Heart right ventricle (tissue), 16 donors: ENCODE measurements at regions of chr2 and their contacts with region 1.

Region 1: GRCh38 chr2:38315707-38316333 is 61.3 kb downstream of the ATL2 start:
- DNase-seq: peak in 1 of 2 donors; percentile 32
- ATAC-seq: peak in 7 of 8 donors; percentile 33 to 73 (median 65)
- H3K4me3 ChIP-seq: no peak overlapping the region
- H3K27ac ChIP-seq: no peak overlapping the region
- H3K4me1 ChIP-seq: peaks cover 0 to 10% (median 0%) of the 10 kb centered on the region in 9 donors
- H3K27me3 ChIP-seq: no peaks in the 10 kb centered on the region
- CTCF ChIP-seq: peak; percentile 67 to 88 (median 81)

Region 2: DNA sequence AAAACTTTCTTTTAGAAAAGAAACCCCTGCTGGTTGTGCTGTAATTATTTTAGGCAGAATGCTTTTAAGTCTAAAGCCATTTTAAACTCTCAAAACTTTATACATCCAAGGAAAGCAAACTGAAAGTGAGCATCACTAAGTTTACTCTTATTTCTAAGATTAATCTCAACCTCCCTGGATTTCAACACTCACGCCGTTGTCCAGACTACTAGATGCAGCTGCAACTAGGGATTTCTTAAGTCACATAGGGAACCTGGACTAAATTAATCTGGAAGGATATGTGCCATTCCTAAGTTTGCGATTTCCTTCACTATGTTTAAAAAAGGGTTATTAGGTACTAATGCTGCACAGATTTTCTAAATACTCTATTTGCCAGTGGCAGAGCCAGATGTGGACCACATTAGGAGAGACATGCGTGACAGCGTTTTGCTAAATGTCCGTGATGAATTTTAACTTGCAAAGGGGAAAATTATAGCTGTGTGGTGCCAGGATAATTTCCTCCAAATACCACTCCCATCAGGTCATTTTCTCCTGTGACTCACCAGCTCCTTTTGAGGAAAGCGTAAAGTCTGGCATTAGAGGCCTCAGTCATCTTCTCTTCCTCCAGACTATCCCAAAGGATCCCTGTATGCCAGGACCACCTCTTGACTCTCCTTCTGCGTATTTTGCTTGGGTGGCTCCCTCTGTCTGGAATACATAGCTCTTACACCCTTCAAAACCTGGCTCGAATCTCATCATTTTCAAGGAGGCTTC is 82.4 kb before region 1 on chr2:
- intact Hi-C with region 1: no loop called
- DNase-seq: peak in 1 of 2 donors; percentile 44
- ATAC-seq: peak; percentile 71 to 94 (median 90)
- H3K4me3 ChIP-seq: no peak overlapping the region
- H3K27ac ChIP-seq: peak overlapping the region in 8 of 10 donors; percentile 13 to 79 (median 58)
- H3K4me1 ChIP-seq: no peaks in the 10 kb centered on the region
- H3K27me3 ChIP-seq: peaks cover 0 to 6% (median 0%) of the 10 kb centered on the region in 7 donors
- CTCF ChIP-seq: peak in 3 of 9 donors; percentile 28 to 38 (median 30)

Region 3: DNA sequence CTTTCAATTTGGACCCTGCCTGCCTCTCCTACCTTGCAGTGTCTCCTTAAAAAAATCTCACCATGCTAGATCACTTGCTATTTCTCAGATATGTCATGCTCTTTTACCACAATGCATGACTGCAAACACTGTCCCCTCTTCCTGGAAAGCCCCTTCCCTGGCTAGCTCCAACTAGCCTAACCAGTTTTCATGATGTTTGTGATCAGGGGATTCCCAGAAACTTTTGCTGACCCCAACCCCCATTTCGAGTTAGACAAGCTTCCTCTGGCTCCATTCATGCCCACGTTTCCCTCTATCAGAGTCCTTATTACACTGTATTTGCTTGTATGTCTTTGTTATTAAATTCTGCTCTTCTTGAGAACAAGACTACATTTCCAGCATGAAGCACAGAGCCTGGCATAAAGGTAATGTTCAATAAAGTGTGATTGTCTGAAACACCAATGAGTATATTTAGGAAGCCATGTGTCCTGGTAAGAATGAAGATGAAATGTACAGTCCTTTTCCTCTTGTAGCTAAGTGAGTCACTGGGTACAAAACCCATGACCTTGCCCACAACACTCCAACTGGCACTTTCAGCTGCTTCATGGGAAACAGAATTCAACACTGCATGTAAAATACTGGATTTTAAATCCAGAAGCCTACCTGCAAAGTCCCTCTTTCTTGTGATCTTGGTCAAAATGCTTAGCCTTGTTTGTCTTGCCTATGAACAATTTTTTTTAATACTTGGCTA is 123.2 kb after region 1 on chr2:
- intact Hi-C with region 1: loop called in 1 of 10 experiments (anchors 10 kb)
- DNase-seq: no peak
- ATAC-seq: peak in 1 of 8 donors; percentile 20
- H3K4me3 ChIP-seq: no peak overlapping the region
- H3K27ac ChIP-seq: no peak overlapping the region
- H3K4me1 ChIP-seq: peaks cover 0 to 29% (median 21%) of the 10 kb centered on the region in 9 donors
- H3K27me3 ChIP-seq: no peaks in the 10 kb centered on the region
- CTCF ChIP-seq: no peak

Region 4: GRCh38 chr2:38465789-38466127 is 149.9 kb after region 1 on chr2:
- intact Hi-C with region 1: loop called in 5 of 10 experiments (anchors 5 to 10 kb)
- DNase-seq: peak in 1 of 2 donors; percentile 23
- ATAC-seq: peak in 4 of 8 donors; percentile 50 to 70 (median 60)
- H3K4me3 ChIP-seq: no peak overlapping the region
- H3K27ac ChIP-seq: no peak overlapping the region
- H3K4me1 ChIP-seq: no peaks in the 10 kb centered on the region
- H3K27me3 ChIP-seq: no peaks in the 10 kb centered on the region
- CTCF ChIP-seq: peak; percentile 10 to 63 (median 45)

Region 5: DNA sequence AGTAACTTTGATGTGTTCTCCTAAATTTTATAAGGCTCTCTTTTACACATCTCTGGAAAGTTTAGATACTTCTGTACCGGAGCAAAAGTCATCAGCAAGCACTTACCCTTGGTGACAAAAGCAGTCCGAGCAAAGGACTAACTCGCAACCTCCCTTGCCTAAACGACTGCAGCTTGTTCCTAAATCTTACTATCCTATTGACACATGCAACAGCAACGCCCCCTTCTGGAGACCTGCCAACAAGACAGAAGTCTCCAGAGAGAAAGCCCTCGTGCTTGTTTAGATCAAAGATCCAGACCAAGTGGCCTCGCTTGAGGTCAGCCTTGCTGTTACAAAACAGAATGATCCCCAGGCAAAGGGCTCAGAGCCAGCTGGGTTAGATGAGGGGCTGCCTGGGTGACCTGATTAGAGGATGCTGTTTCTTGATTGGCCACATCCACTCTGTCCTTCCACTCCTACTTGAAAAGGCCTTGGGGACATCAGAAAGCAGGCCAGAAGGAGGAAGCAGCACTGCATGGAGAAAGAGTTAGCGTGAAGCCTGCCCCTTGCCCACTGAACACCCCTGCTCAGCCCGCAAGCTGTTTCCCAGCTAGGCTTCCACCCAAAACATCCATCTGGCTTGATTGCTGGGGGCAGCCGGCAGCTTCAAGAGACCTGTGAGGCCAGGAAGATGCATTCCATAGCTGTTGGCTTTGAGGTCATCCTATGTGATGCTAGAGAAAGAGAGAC is 192.7 kb after region 1 on chr2:
- intact Hi-C with region 1: loop called in 7 of 10 experiments (anchors 2 to 10 kb)
- DNase-seq: peak; percentile 73 to 91
- ATAC-seq: peak; percentile 77 to 86 (median 82)
- H3K4me3 ChIP-seq: no peak overlapping the region
- H3K27ac ChIP-seq: peak overlapping the region in 3 of 10 donors; percentile 9 to 39 (median 37)
- H3K4me1 ChIP-seq: peaks cover 0 to 29% (median 14%) of the 10 kb centered on the region in 9 donors
- H3K27me3 ChIP-seq: no peaks in the 10 kb centered on the region
- CTCF ChIP-seq: peak in 8 of 9 donors; percentile 9 to 67 (median 47)

Region 6: GRCh38 chr2:38535744-38536506 is 220.1 kb after region 1 on chr2:
- intact Hi-C with region 1: loop called in 1 of 10 experiments (anchors 1 kb)
- DNase-seq: peak; percentile 79 to 87
- ATAC-seq: peak; percentile 94 to 97 (median 96)
- H3K4me3 ChIP-seq: peak overlapping the region; percentile 32 to 63 (median 54)
- H3K27ac ChIP-seq: peak overlapping the region in 2 of 10 donors; percentile 20 to 47
- H3K4me1 ChIP-seq: peaks cover 0 to 14% (median 6%) of the 10 kb centered on the region in 9 donors
- H3K27me3 ChIP-seq: peaks cover 0 to 5% (median 0%) of the 10 kb centered on the region in 7 donors
- CTCF ChIP-seq: peak; percentile 86 to 98 (median 93)

Region 7: DNA sequence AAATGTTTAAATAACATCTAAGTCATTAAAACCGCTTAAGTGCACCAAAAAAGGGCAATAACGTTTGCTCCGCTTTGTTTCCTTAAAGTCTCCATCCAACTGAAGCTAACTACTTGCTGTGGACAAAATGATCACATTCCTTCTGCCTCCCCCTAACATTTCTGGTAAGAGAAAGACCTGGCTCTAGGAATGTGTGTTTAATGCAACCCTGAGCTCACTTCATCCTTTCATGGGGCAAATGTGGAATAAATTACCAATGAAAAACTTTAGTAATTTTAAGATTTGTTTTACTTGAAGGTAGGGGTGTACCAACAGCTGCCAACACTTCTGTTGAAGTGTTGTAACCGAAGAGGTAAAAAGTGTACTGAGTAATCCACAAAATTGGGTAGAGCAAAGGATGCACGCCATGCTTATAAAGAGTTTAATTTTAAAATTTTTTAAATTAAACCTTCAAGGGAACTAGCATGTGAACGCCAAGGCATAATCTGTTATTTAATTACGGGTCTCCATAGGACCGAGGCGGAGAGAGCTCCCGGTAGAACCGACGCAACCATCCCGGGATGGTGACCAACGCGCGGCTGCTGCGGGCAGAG is 285.7 kb after region 1 on chr2:
- intact Hi-C with region 1: no loop called
- DNase-seq: no peak
- ATAC-seq: no peak
- H3K4me3 ChIP-seq: peak overlapping the region; percentile 65 to 97 (median 91)
- H3K27ac ChIP-seq: peak overlapping the region; percentile 92 to 98 (median 97)
- H3K4me1 ChIP-seq: peaks cover 5 to 60% (median 51%) of the 10 kb centered on the region in 9 donors
- H3K27me3 ChIP-seq: no peaks in the 10 kb centered on the region
- CTCF ChIP-seq: no peak

Region 8: GRCh38 chr2:38720613-38721241 is 404.9 kb after region 1 on chr2:
- intact Hi-C with region 1: loop called in 3 of 10 experiments (anchors 10 kb)
- DNase-seq: peak; percentile 73 to 80
- ATAC-seq: peak; percentile 86 to 94 (median 90)
- H3K4me3 ChIP-seq: no peak overlapping the region
- H3K27ac ChIP-seq: peak overlapping the region in 7 of 10 donors; percentile 11 to 78 (median 63)
- H3K4me1 ChIP-seq: peaks cover 0 to 38% (median 19%) of the 10 kb centered on the region in 9 donors
- H3K27me3 ChIP-seq: no peaks in the 10 kb centered on the region
- CTCF ChIP-seq: no peak

Region 9: DNA sequence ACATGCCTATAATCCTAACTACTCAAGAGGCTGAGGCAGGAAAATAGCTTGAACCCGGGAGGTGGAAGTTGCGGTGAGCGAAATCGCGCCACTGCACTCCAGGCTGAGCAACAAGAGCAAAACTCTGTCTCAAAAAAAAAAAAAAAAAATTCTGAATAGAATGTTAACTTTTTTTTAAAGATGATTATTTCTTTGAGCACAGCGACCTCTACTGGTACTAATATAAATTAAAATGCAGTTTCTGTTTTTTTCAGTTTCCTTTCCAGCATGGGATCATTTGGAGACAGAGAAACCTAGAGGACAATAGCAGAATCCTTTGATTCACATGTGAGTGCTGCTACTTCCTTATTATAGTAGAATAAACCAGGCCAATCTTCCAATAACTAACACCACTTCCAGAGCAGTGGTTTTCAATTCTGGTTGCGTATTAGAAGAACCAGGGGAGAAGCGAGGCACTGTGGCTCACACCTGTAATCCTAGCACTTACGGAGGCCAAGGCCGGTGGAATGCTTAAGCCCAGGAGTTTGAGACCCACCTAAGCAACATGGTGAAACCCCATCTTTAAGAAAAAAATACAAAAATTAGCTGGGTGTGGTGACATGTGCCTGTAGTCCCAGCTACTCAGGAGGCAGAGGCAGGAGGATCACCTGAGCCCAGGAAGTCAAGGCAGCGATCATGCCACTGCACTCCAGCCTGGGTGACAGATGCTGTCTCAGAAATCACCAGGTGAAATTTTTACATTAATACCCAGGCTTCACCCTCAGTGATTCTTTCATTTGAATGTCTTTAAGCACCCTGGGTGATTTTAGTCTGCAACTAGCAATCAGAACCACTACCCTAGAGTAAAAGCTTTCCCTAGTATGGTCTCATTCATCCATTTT is 425.3 kb after region 1 on chr2:
- intact Hi-C with region 1: loop called in 4 of 10 experiments (anchors 2 to 10 kb)
- DNase-seq: no peak
- ATAC-seq: peak in 6 of 8 donors; percentile 12 to 47 (median 26)
- H3K4me3 ChIP-seq: peak overlapping the region in 1 of 10 donors; percentile 9
- H3K27ac ChIP-seq: peak overlapping the region in 5 of 10 donors; percentile 14 to 40 (median 38)
- H3K4me1 ChIP-seq: peaks cover 0 to 58% (median 37%) of the 10 kb centered on the region in 9 donors
- H3K27me3 ChIP-seq: no peaks in the 10 kb centered on the region
- CTCF ChIP-seq: peak; percentile 48 to 76 (median 64)